ENCODE measurements at regions of chr16 and their contacts with region 1.

Region 1: DNA sequence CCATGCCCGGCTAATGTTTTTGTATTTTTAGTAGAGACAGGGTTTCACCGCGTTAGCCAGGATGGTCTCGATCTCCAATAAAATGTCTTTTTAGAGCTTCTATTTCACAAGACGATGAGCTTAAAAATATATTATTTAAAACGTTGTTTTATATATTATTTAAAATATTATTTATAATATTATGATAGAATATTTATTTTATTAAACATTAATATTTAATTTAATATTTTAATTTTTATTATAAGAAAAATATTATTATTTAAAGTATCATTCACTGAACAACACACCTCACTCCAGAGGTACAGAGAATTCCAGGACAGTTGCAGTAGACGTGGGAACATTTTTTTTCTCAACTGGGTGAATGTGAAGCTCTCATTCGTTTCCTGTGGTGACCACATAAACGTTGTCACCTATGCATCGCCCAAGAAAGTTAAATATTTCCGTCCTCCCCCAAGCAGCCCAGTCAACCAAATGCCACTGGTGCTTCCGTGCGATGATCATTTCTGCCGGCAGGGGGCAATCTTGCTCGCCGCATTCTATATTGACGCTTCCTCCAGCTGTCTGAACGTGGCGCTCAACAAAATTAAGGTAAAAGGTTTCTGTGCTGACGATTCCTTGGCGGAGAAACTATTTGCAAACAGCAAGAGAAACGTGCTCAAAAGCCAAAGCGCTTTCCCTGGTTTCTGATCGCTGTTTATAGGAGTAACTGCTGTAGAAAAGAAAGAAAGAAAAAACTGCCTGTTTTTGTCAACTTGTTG is 41.7 kb upstream of the PRSS54 start:
- DNase-seq: peak; percentile 93

Region 2: GRCh38 chr16:58494981-58495520 is 158.5 kb after region 1 on chr16:
- in situ Hi-C with region 1: loop called (anchors 10 kb)
- DNase-seq: peak; percentile 86

Region 3: DNA sequence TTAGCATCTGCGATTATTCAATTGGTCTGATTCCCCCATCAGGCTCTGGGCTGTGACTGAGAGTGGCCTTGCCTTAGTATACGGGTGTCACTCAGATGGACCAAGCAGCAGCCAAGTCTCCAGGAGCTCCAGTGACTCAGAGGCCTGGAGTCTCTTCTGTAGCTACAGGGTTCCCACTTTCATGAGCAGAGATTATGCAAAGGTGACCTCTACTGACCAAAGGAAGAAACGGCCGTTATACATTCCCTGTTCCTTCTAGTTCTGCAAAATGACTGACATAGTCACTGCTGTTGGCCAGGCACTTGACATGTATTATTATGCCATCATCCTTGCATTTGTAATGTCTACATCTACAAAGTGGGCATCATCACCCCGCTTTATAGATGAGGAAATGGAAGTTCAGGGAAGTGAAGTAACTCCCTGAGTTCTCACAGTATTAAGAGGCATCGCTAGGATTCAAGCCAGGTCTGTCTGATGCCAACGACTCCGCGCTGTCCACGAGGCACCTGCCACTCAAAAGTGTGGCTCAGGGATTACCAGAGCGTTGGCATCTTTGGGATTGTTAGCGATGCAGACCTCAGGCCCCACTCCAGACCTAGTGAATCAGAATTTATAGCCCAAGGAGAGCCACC is 324.8 kb after region 1 on chr16:
- in situ Hi-C with region 1: loop called (anchors 25 kb)
- DNase-seq: peak; percentile 78

Measured in KBM-7 (cell line).